A673 (cell line): ENCODE measurements at regions of chr12 and their contacts with region 1.

Region 1: GRCh38 chr12:24378548-24379407 is 429.3 kb upstream of the SOX5 start:
- DNase-seq: peak; percentile 97
- H3K4me3 ChIP-seq: no peak overlapping the region
- H3K27ac ChIP-seq: peak overlapping the region; percentile 91
- H3K4me1 ChIP-seq: peaks cover 46% of the 10 kb centered on the region
- H3K27me3 ChIP-seq: no peaks in the 10 kb centered on the region
- CTCF ChIP-seq: no peak

Region 2: GRCh38 chr12:24118668-24119067 is 260.1 kb before region 1 on chr12:
- CTCF ChIA-PET with region 1: no interaction called
- POLR2A ChIA-PET with region 1: no interaction called
- intact Hi-C with region 1: no loop called
- DNase-seq: no peak
- H3K4me3 ChIP-seq: no peak overlapping the region
- H3K27ac ChIP-seq: no peak overlapping the region
- H3K4me1 ChIP-seq: peaks cover 13% of the 10 kb centered on the region
- H3K27me3 ChIP-seq: no peaks in the 10 kb centered on the region
- CTCF ChIP-seq: no peak

Region 3: GRCh38 chr12:24561882-24562760 is 183.3 kb after region 1 on chr12:
- CTCF ChIA-PET with region 1: no interaction called
- POLR2A ChIA-PET with region 1: no interaction called
- intact Hi-C with region 1: loop called (anchors 2 kb)
- DNase-seq: peak; percentile 85
- H3K4me3 ChIP-seq: peak overlapping the region; percentile 81
- H3K27ac ChIP-seq: peak overlapping the region; percentile 87
- H3K4me1 ChIP-seq: peaks cover 45% of the 10 kb centered on the region
- H3K27me3 ChIP-seq: no peaks in the 10 kb centered on the region
- CTCF ChIP-seq: 0 out of 2 replicates have a peak, but pooled peaks have one; percentile 12

Region 4: GRCh38 chr12:24596768-24597388 is 218.1 kb after region 1 on chr12:
- CTCF ChIA-PET with region 1: no interaction called
- POLR2A ChIA-PET with region 1: no interaction called
- intact Hi-C with region 1: loop called (anchors 2 kb)
- DNase-seq: peak; percentile 77
- H3K4me3 ChIP-seq: no peak overlapping the region
- H3K27ac ChIP-seq: no peak overlapping the region
- H3K4me1 ChIP-seq: peaks cover 44% of the 10 kb centered on the region
- H3K27me3 ChIP-seq: no peaks in the 10 kb centered on the region
- CTCF ChIP-seq: peak; percentile 76

Region 5: GRCh38 chr12:24728366-24728765 is 349.6 kb after region 1 on chr12:
- CTCF ChIA-PET with region 1: no interaction called
- POLR2A ChIA-PET with region 1: no interaction called
- intact Hi-C with region 1: loop called (anchors 10 kb)
- DNase-seq: peak; percentile 63
- H3K4me3 ChIP-seq: no peak overlapping the region
- H3K27ac ChIP-seq: no peak overlapping the region
- H3K4me1 ChIP-seq: peaks cover 12% of the 10 kb centered on the region
- H3K27me3 ChIP-seq: no peaks in the 10 kb centered on the region
- CTCF ChIP-seq: peak; percentile 81

Region 6: DNA sequence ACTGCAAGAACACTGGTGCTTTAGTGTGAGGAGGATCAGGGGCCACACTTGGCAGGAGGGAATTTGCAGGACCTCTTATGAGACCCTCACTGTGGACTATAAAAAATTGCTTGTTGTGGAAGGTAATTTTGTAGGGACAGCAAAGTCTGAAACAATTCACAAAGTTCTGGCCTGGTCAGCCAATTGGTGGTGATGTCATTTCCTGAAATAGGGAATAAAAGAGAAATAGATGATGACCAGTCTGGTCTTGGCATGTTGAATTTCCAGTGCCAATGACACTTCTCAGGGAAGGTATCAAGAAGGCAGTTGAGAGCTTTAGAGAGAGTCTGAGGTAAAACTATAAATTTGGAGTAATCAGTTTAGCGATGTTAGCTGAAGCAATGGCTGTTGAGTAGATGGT is 1303.6 kb after region 1 on chr12:
- CTCF ChIA-PET with region 1: no interaction called
- POLR2A ChIA-PET with region 1: no interaction called
- intact Hi-C with region 1: no loop called
- DNase-seq: no peak
- H3K4me3 ChIP-seq: no peak overlapping the region
- H3K27ac ChIP-seq: no peak overlapping the region
- H3K4me1 ChIP-seq: peaks cover 10% of the 10 kb centered on the region
- H3K27me3 ChIP-seq: no peaks in the 10 kb centered on the region
- CTCF ChIP-seq: no peak